A673 (cell line): ENCODE measurements at regions of chr10 and their contacts with region 1.

Region 1: GRCh38 chr10:84264611-84265141 is 19.8 kb downstream of the RGR start:
- DNase-seq: peak; percentile 83
- H3K4me3 ChIP-seq: no peak overlapping the region
- H3K27ac ChIP-seq: no peak overlapping the region
- H3K4me1 ChIP-seq: no peaks in the 10 kb centered on the region
- H3K27me3 ChIP-seq: peaks cover 8% of the 10 kb centered on the region
- CTCF ChIP-seq: peak; percentile 95

Region 2: DNA sequence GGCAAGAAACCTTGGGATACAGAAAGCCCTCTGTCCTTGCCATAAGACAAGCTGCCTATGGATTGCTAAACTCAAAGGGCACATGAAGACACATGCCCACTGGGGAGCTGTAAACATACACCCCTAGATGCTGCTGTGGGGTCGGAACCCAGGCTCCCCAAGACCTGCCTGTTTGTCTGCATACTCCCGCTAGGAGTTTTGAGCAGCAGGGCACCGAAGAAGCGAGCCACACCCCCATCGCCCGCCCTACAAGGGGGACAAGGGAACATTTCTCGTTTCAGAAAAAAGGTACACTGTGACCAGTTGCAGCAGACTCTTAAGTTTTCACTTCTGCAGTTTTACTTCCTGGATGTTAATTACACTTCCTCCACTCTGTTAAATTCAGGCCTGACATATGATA is 805.6 kb before region 1 on chr10:
- CTCF ChIA-PET with region 1: no interaction called
- POLR2A ChIA-PET with region 1: no interaction called
- intact Hi-C with region 1: no loop called
- DNase-seq: no peak
- H3K4me3 ChIP-seq: no peak overlapping the region
- H3K27ac ChIP-seq: no peak overlapping the region
- H3K4me1 ChIP-seq: no peaks in the 10 kb centered on the region
- H3K27me3 ChIP-seq: no peaks in the 10 kb centered on the region
- CTCF ChIP-seq: no peak

Region 3: GRCh38 chr10:84715911-84716310 is 451.2 kb after region 1 on chr10:
- CTCF ChIA-PET with region 1: no interaction called
- POLR2A ChIA-PET with region 1: no interaction called
- intact Hi-C with region 1: loop called (anchors 5 kb)
- DNase-seq: peak; percentile 73
- H3K4me3 ChIP-seq: no peak overlapping the region
- H3K27ac ChIP-seq: no peak overlapping the region
- H3K4me1 ChIP-seq: no peaks in the 10 kb centered on the region
- H3K27me3 ChIP-seq: peaks cover 34% of the 10 kb centered on the region
- CTCF ChIP-seq: peak; percentile 90